K562 (cell line): ENCODE measurements at regions of chr20 and their contacts with region 1.

Region 1: GRCh38 chr20:1392823-1393506 is at the start of gene FKBP1A:
- DNase-seq: peak; percentile 87 to 92 (median 90)
- ATAC-seq: peak; percentile 95
- H3K4me3 ChIP-seq: peak within 1 kb of the TSS; percentile 93
- H3K27ac ChIP-seq: peak within 1 kb of the TSS; percentile 66
- H3K4me1 ChIP-seq: peaks cover 14 to 23% of the 10 kb centered on the region in 2 experiments; a peak in 4 of 5 replicates
- H3K27me3 ChIP-seq: no peaks in the 10 kb centered on the region; a peak in 1 of 5 replicates
- CTCF ChIP-seq: peak in 1 of 3 experiments; percentile 5; a peak in 1 of 6 replicates
- EP300 ChIP-seq: no peak
- POLR2A ChIP-seq: peak; percentile 54; the same call in 1 of the 2 replicates
- RAD21 ChIP-seq: 0 out of 4 replicates have a peak, but pooled peaks of 1 of the 2 experiments have one; percentile 2
- polyA plus RNA-seq, gene FKBP1A: 63.5 to 82.4 TPM

Region 2: GRCh38 chr20:1313236-1313964 is 79.6 kb before region 1 on chr20:
- CTCF ChIA-PET with region 1: interaction called, 6 read pairs
- POLR2A ChIA-PET with region 1: no interaction called
- in situ Hi-C with region 1: no loop called
- intact Hi-C with region 1: loop called (anchors 1 kb)
- DNase-seq: peak; percentile 70 to 75 (median 72)
- ATAC-seq: peak; percentile 87
- H3K4me3 ChIP-seq: no peak overlapping the region
- H3K27ac ChIP-seq: no peak overlapping the region
- H3K4me1 ChIP-seq: peaks cover 0 to 13% of the 10 kb centered on the region in 2 experiments; a peak in 3 of 5 replicates
- H3K27me3 ChIP-seq: no peaks in the 10 kb centered on the region
- CTCF ChIP-seq: peak; percentile 76 to 86 (median 84)
- EP300 ChIP-seq: no peak
- POLR2A ChIP-seq: no peak
- RAD21 ChIP-seq: peak; percentile 55 to 81

Region 3: GRCh38 chr20:1325173-1326030 is 67.6 kb before region 1 on chr20:
- CTCF ChIA-PET with region 1: no interaction called
- POLR2A ChIA-PET with region 1: interaction called, 4 read pairs
- in situ Hi-C with region 1: no loop called
- intact Hi-C with region 1: loop called (anchors 5 kb)
- DNase-seq: peak; percentile 94 to 97 (median 96)
- ATAC-seq: peak; percentile 96
- H3K4me3 ChIP-seq: peak overlapping the region; percentile 55
- H3K27ac ChIP-seq: peak overlapping the region; percentile 89
- H3K4me1 ChIP-seq: peaks cover 20 to 36% of the 10 kb centered on the region in 2 experiments; a peak in 4 of 5 replicates
- H3K27me3 ChIP-seq: no peaks in the 10 kb centered on the region
- CTCF ChIP-seq: no peak
- EP300 ChIP-seq: no peak
- POLR2A ChIP-seq: peak; percentile 95
- RAD21 ChIP-seq: no peak

Region 4: GRCh38 chr20:1381753-1382591 is 11.0 kb before region 1 on chr20:
- CTCF ChIA-PET with region 1: no interaction called
- POLR2A ChIA-PET with region 1: interaction called, 10 read pairs
- in situ Hi-C with region 1: no loop called
- intact Hi-C with region 1: no loop called
- DNase-seq: no peak
- ATAC-seq: peak; percentile 27; the same call in 2 of the 3 replicates
- H3K4me3 ChIP-seq: no peak overlapping the region
- H3K27ac ChIP-seq: peak overlapping the region; percentile 50; the same call in 2 of the 3 replicates
- H3K4me1 ChIP-seq: peaks cover 0 to 49% of the 10 kb centered on the region in 2 experiments; a peak in 3 of 5 replicates
- H3K27me3 ChIP-seq: no peaks in the 10 kb centered on the region
- CTCF ChIP-seq: no peak
- EP300 ChIP-seq: no peak
- POLR2A ChIP-seq: no peak
- RAD21 ChIP-seq: no peak